ENCODE measurements at regions of chrX and their contacts with region 1.

Region 1: DNA sequence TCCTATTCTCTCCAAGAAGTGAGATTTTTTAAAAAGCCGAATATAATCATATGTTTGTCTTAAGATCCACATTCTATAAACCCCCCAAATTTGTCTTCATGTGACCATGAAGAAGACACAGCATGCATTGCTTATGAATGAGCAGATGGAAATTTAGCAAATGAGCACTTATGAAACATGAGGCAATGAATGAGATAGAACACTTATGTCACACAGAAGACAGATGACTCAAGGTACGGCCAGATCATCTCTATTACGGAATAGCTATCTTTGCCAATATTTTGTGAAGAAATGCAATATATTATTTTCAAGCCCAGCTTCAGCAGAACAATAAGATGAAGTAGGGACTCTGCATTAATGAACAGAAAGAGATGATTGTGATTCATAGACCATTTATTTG is 21.4 kb downstream of the PHEX start:
- DNase-seq: no peak
- H3K4me3 ChIP-seq: no peak overlapping the region
- H3K27ac ChIP-seq: no peak overlapping the region
- H3K4me1 ChIP-seq: peaks cover 4% of the 10 kb centered on the region; the same call in 1 of the 2 replicates
- H3K27me3 ChIP-seq: no peaks in the 10 kb centered on the region
- CTCF ChIP-seq: no peak

Region 2: GRCh38 chrX:21946925-21947641 is 106.4 kb before region 1 on chrX:
- CTCF ChIA-PET with region 1: no interaction called
- POLR2A ChIA-PET with region 1: no interaction called
- intact Hi-C with region 1: no loop called
- DNase-seq: peak in 1 of 2 experiments; percentile 12
- H3K4me3 ChIP-seq: no peak overlapping the region
- H3K27ac ChIP-seq: peak overlapping the region; percentile 26; the same call in 1 of the 2 replicates
- H3K4me1 ChIP-seq: peaks cover 36% of the 10 kb centered on the region
- H3K27me3 ChIP-seq: no peaks in the 10 kb centered on the region
- CTCF ChIP-seq: no peak

Region 3: GRCh38 chrX:23503835-23504542 is 1450.5 kb after region 1 on chrX:
- CTCF ChIA-PET with region 1: no interaction called
- POLR2A ChIA-PET with region 1: interaction called, 23 read pairs
- intact Hi-C with region 1: no loop called
- DNase-seq: peak; percentile 89 to 90
- H3K4me3 ChIP-seq: peak overlapping the region; percentile 46; the same call in 1 of the 2 replicates
- H3K27ac ChIP-seq: peak overlapping the region; percentile 43
- H3K4me1 ChIP-seq: peaks cover 26% of the 10 kb centered on the region
- H3K27me3 ChIP-seq: no peaks in the 10 kb centered on the region
- CTCF ChIP-seq: no peak